Endothelial cell of umbilical vein (primary cell): ENCODE measurements at regions of chr12 and their contacts with region 1.

Region 1: GRCh38 chr12:56468216-56469006 is at the start of gene SPRYD4:
- DNase-seq: peak; percentile 92
- H3K4me3 ChIP-seq: peak within 1 kb of the TSS; percentile 66 to 93 (median 93)
- H3K27ac ChIP-seq: peak within 1 kb of the TSS; percentile 58
- H3K4me1 ChIP-seq: peaks cover 7% of the 10 kb centered on the region
- H3K27me3 ChIP-seq: no peaks in the 10 kb centered on the region
- CTCF ChIP-seq: peak; percentile 8 to 14
- POLR2A ChIP-seq: peak; percentile 97
- total RNA-seq, gene SPRYD4: 3.4 and 3.5 TPM in 2 replicates

Region 2: DNA sequence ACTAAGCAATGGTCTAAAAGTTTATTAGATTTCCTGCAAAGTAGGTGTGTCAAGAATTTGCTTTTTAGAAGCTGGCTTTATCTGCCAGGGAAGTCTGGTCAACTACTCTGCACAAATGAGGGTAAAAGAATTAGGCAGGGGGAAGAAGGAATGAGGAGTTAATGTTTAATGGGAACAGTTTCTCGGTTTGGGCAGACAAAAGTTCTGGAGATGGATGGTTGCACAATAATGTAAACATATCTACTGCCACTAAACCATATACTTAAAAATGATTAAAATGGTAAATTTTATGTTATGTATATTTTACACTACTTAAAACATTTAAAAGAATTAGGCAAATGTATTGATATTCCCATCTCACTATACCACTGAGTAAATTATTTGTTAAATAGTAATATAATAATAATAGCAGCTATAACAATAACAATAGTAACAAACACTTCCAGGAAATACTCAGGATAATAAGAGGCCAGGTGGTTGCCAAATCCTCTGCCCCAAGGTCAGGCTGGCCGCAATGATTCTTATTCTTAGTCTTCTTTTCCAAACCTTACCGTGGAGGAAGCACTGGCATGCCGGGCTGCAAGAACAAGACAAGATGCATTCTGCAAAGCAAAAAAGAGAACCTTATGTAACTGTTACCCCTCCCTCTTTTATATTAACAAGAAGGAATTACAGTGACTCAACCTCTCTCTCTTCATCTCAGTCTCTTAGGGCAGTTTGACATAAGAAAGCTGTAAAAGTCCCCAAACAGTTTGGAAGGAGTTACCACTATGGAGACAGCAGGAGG is 182.2 kb before region 1 on chr12:
- CTCF ChIA-PET with region 1: interaction called, 17 read pairs
- POLR2A ChIA-PET with region 1: no interaction called
- dilution Hi-C with region 1: no loop called
- intact Hi-C with region 1: loop called (anchors 1 kb)
- DNase-seq: peak; percentile 27
- H3K4me3 ChIP-seq: no peak overlapping the region
- H3K27ac ChIP-seq: no peak overlapping the region
- H3K4me1 ChIP-seq: peaks cover 8% of the 10 kb centered on the region
- H3K27me3 ChIP-seq: no peaks in the 10 kb centered on the region
- CTCF ChIP-seq: no peak
- POLR2A ChIP-seq: no peak

Region 3: DNA sequence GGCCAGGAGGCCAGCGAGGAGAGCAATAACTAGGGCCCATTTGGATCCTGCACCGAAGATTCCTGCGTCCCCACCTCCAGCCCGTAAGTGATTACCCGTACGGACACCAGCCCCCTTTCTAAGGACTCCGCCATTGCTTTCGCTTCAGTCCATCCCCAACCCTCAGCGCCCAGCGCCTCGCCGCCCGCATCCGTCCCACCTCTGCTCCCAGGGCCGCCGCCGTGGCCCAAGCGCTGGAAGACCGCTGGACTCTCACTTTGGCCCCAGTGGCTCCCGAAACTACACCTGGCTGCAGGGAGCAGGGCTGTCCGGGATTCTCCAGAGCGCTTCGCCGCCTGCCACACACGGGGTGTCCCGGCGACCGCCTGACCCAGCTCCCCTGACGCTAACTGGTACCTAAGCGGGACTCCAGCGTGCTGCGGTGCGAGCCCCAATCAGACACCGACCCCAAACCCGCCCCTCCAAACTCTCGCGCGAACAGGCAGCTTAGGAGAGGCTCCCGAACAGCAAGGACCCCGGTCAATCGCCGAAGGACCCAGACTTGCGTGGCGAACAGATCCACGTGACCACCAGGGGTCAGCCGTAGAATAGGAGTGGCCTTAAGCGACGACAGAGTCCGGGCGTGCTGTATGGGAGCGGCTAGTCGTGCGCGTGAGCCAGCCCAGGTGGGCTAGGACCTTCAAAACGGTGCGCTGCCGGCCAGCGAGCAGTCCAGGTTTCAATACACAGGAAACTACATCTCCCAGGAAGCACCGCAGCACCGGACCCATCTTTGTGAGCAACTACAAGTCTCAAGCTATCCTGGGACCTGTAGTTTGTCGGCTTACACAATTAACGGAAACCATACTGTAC is 152.6 kb before region 1 on chr12 and contains the start of gene CNPY2:
- CTCF ChIA-PET with region 1: interaction called, 60 read pairs
- POLR2A ChIA-PET with region 1: interaction called, 9 read pairs
- dilution Hi-C with region 1: no loop called
- intact Hi-C with region 1: loop called (anchors 1 kb)
- DNase-seq: peak; percentile 98
- H3K4me3 ChIP-seq: peak within 1 kb of the TSS; percentile 15 to 70 (median 57)
- H3K27ac ChIP-seq: peak within 1 kb of the TSS; percentile 63
- H3K4me1 ChIP-seq: peaks cover 9% of the 10 kb centered on the region
- H3K27me3 ChIP-seq: no peaks in the 10 kb centered on the region
- CTCF ChIP-seq: peak in 1 of 2 donors; percentile 23
- POLR2A ChIP-seq: peak; percentile 64
- total RNA-seq, gene CNPY2: 166 and 183 TPM in 2 replicates

Region 4: DNA sequence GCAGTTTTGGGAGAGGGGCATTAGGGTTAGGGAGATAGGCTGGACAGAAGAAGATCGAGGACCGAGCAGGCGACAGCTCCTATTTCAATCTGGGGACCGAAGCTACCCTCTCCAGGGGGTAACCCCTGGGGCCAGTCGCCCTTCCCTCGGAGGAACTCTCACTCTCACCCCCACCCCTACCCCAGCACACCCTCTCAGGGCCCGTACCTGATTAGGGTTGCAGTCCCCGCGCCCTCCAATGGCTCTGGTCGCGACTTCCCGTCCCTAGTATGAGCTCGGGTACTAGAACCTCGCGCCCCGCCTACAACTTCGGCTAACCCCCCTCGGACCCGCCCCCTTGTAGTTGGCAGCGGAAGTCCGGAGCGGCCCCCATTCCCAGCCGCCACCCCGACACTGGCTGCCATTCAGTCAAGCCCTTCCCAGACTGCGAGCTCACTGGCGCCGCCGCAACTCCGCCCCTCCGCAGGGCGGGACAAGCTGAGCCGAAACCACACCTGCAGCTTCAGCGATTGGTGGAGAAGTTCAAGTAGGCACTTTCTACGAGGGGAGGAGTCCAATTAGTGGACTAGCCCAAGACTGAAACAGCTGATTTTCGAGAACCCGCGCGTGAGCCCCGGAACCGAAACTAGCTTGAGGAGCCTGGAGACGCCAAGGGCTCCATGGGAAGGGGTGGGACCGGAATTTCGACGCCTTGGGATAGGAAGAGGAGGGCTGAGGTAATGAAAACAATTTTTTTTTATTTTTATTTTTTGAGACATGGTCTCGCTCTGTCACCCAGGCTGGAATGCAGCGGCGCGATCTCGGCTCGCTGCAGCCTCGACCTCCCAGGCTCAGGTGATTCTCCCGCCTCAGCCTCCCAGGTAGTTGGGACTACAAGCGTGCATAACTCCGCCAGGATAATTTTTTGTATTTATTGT is 108.3 kb before region 1 on chr12 and contains the start of gene STAT2:
- CTCF ChIA-PET with region 1: interaction called, 38 read pairs
- POLR2A ChIA-PET with region 1: no interaction called
- dilution Hi-C with region 1: no loop called
- intact Hi-C with region 1: loop called (anchors 1 kb)
- DNase-seq: peak; percentile 100
- H3K4me3 ChIP-seq: peak within 1 kb of the TSS; percentile 59 to 92 (median 74)
- H3K27ac ChIP-seq: peak within 1 kb of the TSS; percentile 73
- H3K4me1 ChIP-seq: peaks cover 14% of the 10 kb centered on the region
- H3K27me3 ChIP-seq: no peaks in the 10 kb centered on the region
- CTCF ChIP-seq: no peak
- POLR2A ChIP-seq: peak; percentile 80
- total RNA-seq, gene STAT2: 66.5 and 74.8 TPM in 2 replicates

Region 5: DNA sequence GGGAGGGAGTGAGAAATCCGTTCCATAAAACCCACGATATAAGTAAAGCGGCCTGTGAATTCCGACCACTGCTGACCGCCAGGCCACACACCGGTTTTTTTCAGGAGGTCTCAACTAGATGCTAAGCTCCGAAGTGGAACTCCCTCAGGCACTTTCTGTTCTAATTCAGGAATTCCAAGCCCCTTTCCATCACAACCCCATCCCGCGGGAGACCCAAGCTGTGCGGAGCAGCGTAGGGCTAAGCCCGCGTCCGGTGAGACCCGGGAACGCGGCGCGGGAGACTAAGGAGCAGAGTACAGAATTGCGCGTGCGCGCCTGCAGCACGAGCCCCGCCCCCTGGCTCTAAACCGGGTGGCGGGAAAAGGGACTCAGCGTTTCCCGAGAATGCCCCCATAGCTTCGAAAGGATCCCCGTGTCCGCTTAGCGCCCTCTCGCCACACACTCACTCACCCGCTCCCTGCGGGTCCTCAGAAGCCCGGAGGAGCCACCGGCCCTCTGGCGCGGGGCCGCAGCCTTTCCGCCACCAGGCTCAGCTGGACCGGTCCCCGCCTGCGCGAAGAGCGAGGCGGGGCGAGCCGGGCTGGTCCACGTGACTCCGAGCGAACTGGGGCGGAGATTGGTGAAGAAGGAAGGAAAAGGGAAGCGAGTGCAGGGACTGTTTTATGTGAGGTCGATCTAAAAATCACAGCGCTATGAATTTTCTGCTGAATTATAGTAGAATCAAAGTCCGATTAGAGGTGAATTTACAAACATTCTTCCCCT is 19.4 kb before region 1 on chr12 and contains the start of gene TIMELESS:
- CTCF ChIA-PET with region 1: interaction called, 19 read pairs
- POLR2A ChIA-PET with region 1: interaction called, 3 read pairs
- dilution Hi-C with region 1: no loop called
- intact Hi-C with region 1: loop called (anchors 2 kb)
- DNase-seq: peak; percentile 94
- H3K4me3 ChIP-seq: peak within 1 kb of the TSS; percentile 53 to 88 (median 77)
- H3K27ac ChIP-seq: peak within 1 kb of the TSS; percentile 61
- H3K4me1 ChIP-seq: peaks cover 20% of the 10 kb centered on the region
- H3K27me3 ChIP-seq: peaks cover 0 to 3% of the 10 kb centered on the region in 2 experiments
- CTCF ChIP-seq: no peak
- POLR2A ChIP-seq: peak; percentile 84
- total RNA-seq, gene TIMELESS: 28.2 and 28.4 TPM in 2 replicates